ENCODE measurements at regions of chr20 and their contacts with region 1.

Region 1: DNA sequence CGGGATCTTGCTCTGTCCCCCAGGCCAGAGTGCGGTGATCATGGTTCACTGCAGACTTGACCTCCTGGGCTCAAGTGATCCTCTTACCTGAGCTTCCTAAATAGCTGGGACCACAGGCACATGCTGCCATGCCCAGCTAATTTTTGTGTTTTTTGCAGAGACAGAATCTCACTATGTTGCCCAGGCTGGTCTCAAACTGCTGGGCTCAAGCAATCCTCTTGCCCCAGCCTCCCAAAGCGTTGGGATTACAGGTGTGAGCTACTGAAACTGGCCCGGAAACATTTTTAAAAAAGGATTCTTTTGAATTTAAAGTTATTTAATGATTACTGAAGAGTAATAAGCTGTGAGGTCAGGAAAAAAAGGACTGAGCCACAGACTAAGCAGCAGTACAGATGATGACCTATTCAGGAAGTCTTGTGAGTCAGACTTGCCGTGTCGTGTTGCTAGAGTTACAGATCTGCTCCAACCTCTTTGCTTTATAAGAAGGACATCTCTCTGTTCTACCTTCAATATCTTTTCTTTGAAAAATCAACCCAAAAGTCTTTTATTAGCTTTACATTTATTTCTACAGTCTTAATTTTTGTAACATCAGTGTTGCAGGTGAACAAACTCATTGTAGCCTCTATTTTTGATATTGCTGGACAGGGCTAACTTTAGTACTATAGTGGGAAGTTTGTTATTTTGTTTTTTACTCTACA is 108.7 kb downstream of the NCOA3 start:
- DNase-seq: peak; percentile 27
- H3K4me3 ChIP-seq: no peak overlapping the region
- H3K27ac ChIP-seq: no peak overlapping the region
- H3K4me1 ChIP-seq: peaks cover 19% of the 10 kb centered on the region
- H3K27me3 ChIP-seq: no peaks in the 10 kb centered on the region
- CTCF ChIP-seq: no peak

Region 2: DNA sequence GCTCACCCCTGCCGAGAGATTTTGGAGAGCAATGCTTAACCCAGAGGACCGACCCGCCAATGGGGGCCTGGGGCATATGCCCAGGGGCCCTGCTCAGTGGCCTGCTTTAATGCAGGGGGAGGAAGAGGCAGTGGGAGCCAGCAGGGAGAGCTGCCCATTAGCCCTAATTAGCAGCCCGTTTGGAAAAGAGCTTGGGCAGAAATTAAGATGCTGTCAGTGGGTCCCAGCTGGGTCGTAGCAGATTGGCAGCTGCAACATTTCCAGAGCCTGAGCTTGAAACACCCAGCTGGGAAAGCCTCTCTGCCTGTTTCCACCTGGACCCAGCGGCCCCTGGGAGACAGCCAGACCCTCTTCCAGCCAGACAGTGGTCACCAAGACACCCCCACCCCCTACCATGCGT is 1452.8 kb before region 1 on chr20:
- CTCF ChIA-PET with region 1: no interaction called
- POLR2A ChIA-PET with region 1: no interaction called
- intact Hi-C with region 1: no loop called
- DNase-seq: no peak
- H3K4me3 ChIP-seq: no peak overlapping the region
- H3K27ac ChIP-seq: no peak overlapping the region
- H3K4me1 ChIP-seq: no peaks in the 10 kb centered on the region
- H3K27me3 ChIP-seq: peaks cover 10% of the 10 kb centered on the region
- CTCF ChIP-seq: no peak

Region 3: DNA sequence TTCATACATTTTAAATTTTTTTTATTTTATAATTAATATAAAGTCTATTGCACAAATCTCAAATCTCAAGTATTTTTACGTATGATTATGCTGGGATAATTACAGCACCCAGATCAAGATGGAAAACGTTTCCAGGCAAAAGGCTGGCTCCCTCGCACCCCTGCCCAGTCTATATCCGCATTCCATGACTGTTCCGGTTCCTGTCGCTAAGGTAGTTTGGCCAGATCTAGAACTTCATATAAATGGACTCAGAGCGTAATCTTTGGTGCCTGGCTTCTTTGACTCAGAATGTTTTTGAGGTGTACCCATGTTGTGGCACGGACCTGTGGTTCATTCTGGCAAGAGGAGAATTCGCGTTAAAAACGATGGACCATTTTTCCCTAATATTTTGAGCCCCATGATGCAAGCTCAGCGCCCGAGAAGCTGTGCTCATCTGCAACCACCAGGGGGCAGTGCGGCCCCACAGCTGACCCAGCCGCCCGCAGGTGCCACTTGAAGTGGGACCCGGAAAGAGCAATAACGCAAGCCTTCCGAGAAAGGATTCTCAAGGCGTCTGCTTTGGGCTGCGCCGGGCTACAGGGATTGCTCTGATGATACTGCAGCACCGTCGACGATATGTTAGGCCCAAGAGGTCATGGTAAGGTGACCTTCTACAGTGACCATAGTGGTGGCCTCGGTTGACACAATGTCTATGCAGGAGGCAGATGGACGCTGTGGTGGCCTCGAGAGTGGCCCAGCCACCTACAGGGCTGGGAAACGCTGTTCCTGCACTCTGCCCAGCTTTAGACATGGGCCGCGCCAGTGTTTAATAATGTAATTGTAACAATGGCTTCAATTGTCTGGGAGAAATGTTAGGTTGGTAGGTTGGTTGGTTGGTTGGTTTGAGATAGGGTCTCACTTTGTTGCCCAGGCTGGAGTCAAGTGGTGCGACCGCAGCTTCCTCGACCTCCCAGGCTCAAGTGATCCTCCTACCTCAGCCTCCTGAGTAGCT is 414.0 kb before region 1 on chr20:
- CTCF ChIA-PET with region 1: no interaction called
- POLR2A ChIA-PET with region 1: no interaction called
- intact Hi-C with region 1: loop called (anchors 10 kb)
- DNase-seq: peak; percentile 83
- H3K4me3 ChIP-seq: no peak overlapping the region
- H3K27ac ChIP-seq: no peak overlapping the region
- H3K4me1 ChIP-seq: no peaks in the 10 kb centered on the region
- H3K27me3 ChIP-seq: no peaks in the 10 kb centered on the region
- CTCF ChIP-seq: peak; percentile 98

Region 4: GRCh38 chr20:47501483-47502270 is 108.7 kb before region 1 on chr20 and contains the start of gene NCOA3:
- CTCF ChIA-PET with region 1: no interaction called
- POLR2A ChIA-PET with region 1: no interaction called
- intact Hi-C with region 1: loop called (anchors 10 kb)
- DNase-seq: peak; percentile 98
- H3K4me3 ChIP-seq: peak within 1 kb of the TSS; percentile 88
- H3K27ac ChIP-seq: peak within 1 kb of the TSS; percentile 93
- H3K4me1 ChIP-seq: peaks cover 9% of the 10 kb centered on the region
- H3K27me3 ChIP-seq: no peaks in the 10 kb centered on the region
- CTCF ChIP-seq: peak; percentile 41; the same call in 1 of the 2 replicates
- total RNA-seq, gene NCOA3: 26.2 and 26.8 TPM in 2 replicates

Region 5: DNA sequence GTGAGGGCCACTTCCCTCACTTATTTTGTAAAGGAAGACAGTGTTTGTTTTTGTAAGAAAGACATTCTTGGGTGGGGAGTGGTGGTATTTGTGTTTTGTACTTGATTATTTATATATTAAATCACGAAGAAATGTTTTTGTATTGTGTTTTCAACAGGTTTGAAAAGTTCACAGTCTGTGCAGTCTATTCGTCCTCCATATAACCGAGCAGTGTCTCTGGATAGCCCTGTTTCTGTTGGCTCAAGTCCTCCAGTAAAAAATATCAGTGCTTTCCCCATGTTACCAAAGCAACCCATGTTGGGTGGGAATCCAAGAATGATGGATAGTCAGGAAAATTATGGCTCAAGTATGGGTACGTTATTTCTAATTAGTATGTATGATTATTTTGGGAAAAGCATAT is 28.5 kb after region 1 on chr20:
- CTCF ChIA-PET with region 1: no interaction called
- POLR2A ChIA-PET with region 1: no interaction called
- intact Hi-C with region 1: no loop called
- DNase-seq: no peak
- H3K4me3 ChIP-seq: no peak overlapping the region
- H3K27ac ChIP-seq: no peak overlapping the region
- H3K4me1 ChIP-seq: no peaks in the 10 kb centered on the region
- H3K27me3 ChIP-seq: no peaks in the 10 kb centered on the region
- CTCF ChIP-seq: no peak

Measured in A673 (cell line).